Left colon (tissue), 2 donors: ENCODE measurements at regions of chr9 and their contacts with region 1.

Region 1: GRCh38 chr9:72271613-72272478 is 93.2 kb downstream of the ZFAND5 start:
- DNase-seq: peak; percentile 33 to 43
- ATAC-seq: peak; percentile 73

Region 2: DNA sequence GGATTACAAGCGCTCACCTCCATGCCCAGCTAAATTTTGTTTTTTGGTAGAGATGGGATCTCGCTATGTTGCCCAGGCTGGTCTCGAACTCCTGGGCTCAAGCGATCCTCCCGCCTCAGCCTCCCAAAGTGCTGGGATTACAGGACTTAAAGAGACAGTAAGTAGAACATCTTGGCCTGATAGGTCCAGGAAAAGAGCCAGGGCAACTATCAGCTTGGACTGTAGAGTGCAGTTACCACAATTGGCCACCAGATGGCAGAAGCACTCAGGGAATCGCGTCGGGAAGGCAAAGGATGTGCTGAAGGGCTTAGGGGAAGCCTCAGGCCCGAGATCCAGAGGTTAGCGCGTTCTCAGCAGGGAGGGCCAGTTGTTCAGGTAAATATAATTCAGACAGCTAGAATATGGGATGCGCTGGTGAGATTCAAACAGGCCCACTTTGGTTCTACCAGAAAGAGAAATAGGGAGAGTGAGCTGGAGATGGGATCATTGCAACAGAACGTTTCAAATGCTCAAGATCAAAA is 232.9 kb before region 1 on chr9:
- intact Hi-C with region 1: loop called (anchors 2 to 10 kb)
- DNase-seq: peak; percentile 56 to 80
- ATAC-seq: peak; percentile 87